ENCODE measurements at regions of chr10 and their contacts with region 1.

Region 1: DNA sequence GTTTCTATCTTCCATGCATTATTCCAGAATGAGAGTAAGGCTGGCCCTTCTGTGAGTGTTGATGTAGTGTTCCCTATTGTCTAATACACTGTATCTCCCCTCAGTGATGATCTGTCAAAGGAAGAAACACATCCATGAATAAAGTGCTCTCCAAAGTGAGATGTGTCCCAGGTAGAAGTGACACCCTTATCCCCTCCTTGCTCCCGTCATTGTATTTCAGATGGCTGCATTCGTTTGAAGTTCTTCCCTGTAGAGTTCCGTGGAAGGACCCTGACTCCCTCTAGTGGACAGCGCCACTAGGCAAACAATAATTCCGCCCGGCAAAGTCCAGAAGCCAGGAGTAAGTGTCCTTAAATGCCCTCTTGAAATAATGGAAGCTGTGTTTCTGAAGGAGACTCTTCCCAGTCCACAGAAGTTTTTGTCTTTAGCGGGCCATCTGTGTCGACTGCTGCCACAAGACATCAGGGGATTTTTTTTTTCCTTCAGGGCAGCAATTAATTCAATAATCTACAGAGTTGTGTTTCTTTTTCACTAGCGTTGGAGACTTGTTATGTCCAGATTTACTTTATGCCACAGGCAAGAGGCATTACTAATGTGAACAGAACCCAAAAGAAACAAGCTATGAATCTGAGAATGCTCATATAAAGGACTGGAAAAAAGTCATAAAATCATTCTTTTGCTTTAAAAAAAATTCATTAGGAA is 64.6 kb downstream of the THNSL1 start:
- DNase-seq: peak; percentile 66
- H3K4me3 ChIP-seq: peak overlapping the region in 1 of 2 experiments; percentile 42; a peak in 1 of 4 replicates
- H3K27ac ChIP-seq: peak overlapping the region; percentile 60 to 65; a peak in 3 of 4 replicates
- H3K4me1 ChIP-seq: peaks cover 0 to 2% of the 10 kb centered on the region in 2 experiments; a peak in 2 of 4 replicates
- H3K27me3 ChIP-seq: no peaks in the 10 kb centered on the region
- CTCF ChIP-seq: peak; percentile 95
- EP300 ChIP-seq: no peak
- RAD21 ChIP-seq: peak; percentile 93

Region 2: DNA sequence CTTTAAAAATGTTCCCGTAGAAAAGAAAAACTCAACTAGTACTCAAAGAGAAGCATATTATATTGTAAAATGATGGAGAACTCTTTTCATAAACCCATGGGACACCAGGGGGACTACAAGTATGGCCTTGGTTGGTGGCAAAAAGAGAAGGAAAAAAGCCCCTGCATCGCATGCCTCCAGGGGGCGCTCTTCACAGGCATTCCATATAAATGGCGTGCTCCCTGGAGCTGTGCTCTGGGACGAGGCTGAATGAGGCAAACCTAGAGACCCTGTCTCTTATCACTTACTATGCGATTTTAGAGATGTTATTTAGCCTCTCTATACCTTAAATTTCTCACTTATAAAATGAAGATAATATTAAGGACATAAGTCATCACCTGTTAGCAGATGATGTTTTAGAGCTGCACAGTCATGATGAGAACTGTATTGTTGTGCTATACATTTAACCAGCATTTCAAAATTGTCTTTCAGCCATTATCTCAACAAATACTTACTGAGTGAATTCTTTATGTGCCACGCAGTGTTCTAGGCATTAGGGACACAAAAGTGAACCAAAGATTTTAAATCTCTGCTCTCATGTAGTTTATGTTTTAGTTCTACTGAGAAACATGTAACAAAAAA is 463.1 kb before region 1 on chr10:
- CTCF ChIA-PET with region 1: interaction called, 10 read pairs
- POLR2A ChIA-PET with region 1: no interaction called
- DNase-seq: peak; percentile 14
- H3K4me3 ChIP-seq: peak overlapping the region in 1 of 2 experiments; percentile 52; a peak in 1 of 4 replicates
- H3K27ac ChIP-seq: no peak overlapping the region
- H3K4me1 ChIP-seq: peaks cover 0 to 4% of the 10 kb centered on the region in 2 experiments; a peak in 2 of 4 replicates
- H3K27me3 ChIP-seq: no peaks in the 10 kb centered on the region
- CTCF ChIP-seq: peak; percentile 80
- EP300 ChIP-seq: no peak
- RAD21 ChIP-seq: peak; percentile 24; the same call in 1 of the 2 replicates

Region 3: GRCh38 chr10:24642622-24643417 is 438.2 kb before region 1 on chr10:
- CTCF ChIA-PET with region 1: interaction called, 32 read pairs
- POLR2A ChIA-PET with region 1: no interaction called
- DNase-seq: peak; percentile 60
- H3K4me3 ChIP-seq: no peak overlapping the region
- H3K27ac ChIP-seq: peak overlapping the region in 1 of 2 experiments; percentile 27; a peak in 1 of 4 replicates
- H3K4me1 ChIP-seq: peaks cover 0 to 4% of the 10 kb centered on the region in 2 experiments; a peak in 2 of 4 replicates
- H3K27me3 ChIP-seq: no peaks in the 10 kb centered on the region
- CTCF ChIP-seq: peak; percentile 85
- EP300 ChIP-seq: no peak
- RAD21 ChIP-seq: peak; percentile 94

Region 4: DNA sequence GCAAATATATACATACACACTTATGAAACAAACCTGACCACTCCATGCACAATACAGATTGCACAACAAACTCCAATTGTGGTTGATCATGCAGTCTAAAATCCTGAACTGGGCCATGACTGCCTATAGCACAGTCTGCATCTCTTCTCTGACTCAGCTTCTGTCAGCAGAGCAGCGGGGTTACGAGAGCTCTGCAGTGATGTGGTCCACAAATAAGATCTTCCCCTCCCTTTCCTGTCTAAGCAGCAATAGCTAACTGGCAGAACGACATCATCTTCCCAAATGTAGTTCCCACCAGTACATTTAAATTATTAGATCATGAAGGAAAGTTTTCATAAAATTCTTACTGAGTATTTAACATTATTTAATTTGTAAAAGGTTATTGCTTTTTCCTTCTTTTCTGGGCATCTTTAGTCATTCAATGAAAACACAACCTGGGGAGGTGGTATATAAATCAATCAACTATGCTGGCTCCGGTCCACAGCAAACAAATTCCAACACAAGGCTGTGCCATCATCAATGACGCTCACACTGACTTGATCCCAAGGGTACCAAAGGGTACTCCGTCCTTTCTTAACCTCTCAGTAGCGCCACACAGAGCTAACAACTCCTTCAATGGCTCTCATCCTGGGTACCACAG is 374.4 kb before region 1 on chr10:
- CTCF ChIA-PET with region 1: no interaction called
- POLR2A ChIA-PET with region 1: no interaction called
- DNase-seq: peak; percentile 42
- H3K4me3 ChIP-seq: no peak overlapping the region
- H3K27ac ChIP-seq: peak overlapping the region in 1 of 2 experiments; percentile 63; a peak in 2 of 4 replicates
- H3K4me1 ChIP-seq: peaks cover 21 to 28% of the 10 kb centered on the region in 2 experiments; a peak in 3 of 4 replicates
- H3K27me3 ChIP-seq: no peaks in the 10 kb centered on the region
- CTCF ChIP-seq: no peak
- EP300 ChIP-seq: no peak
- RAD21 ChIP-seq: no peak

Region 5: GRCh38 chr10:25038325-25038724 is 42.7 kb before region 1 on chr10:
- CTCF ChIA-PET with region 1: interaction called, 10 read pairs
- POLR2A ChIA-PET with region 1: no interaction called
- DNase-seq: no peak
- H3K4me3 ChIP-seq: no peak overlapping the region
- H3K27ac ChIP-seq: no peak overlapping the region
- H3K4me1 ChIP-seq: no peaks in the 10 kb centered on the region
- H3K27me3 ChIP-seq: no peaks in the 10 kb centered on the region
- CTCF ChIP-seq: no peak
- EP300 ChIP-seq: no peak
- RAD21 ChIP-seq: no peak

Region 6: GRCh38 chr10:25047088-25047487 is 33.9 kb before region 1 on chr10:
- CTCF ChIA-PET with region 1: interaction called, 11 read pairs
- POLR2A ChIA-PET with region 1: no interaction called
- DNase-seq: no peak
- H3K4me3 ChIP-seq: no peak overlapping the region
- H3K27ac ChIP-seq: no peak overlapping the region
- H3K4me1 ChIP-seq: no peaks in the 10 kb centered on the region
- H3K27me3 ChIP-seq: no peaks in the 10 kb centered on the region
- CTCF ChIP-seq: no peak
- EP300 ChIP-seq: no peak
- RAD21 ChIP-seq: no peak

Region 7: GRCh38 chr10:25059764-25060389 is 21.2 kb before region 1 on chr10:
- CTCF ChIA-PET with region 1: interaction called, 12 read pairs
- POLR2A ChIA-PET with region 1: no interaction called
- DNase-seq: no peak
- H3K4me3 ChIP-seq: no peak overlapping the region
- H3K27ac ChIP-seq: peak overlapping the region in 1 of 2 experiments; percentile 40; a peak in 2 of 4 replicates
- H3K4me1 ChIP-seq: no peaks in the 10 kb centered on the region; a peak in 1 of 4 replicates
- H3K27me3 ChIP-seq: no peaks in the 10 kb centered on the region
- CTCF ChIP-seq: no peak
- EP300 ChIP-seq: no peak
- RAD21 ChIP-seq: no peak

Region 8: GRCh38 chr10:25068152-25069058 is 12.6 kb before region 1 on chr10:
- CTCF ChIA-PET with region 1: interaction called, 30 read pairs
- POLR2A ChIA-PET with region 1: no interaction called
- DNase-seq: no peak
- H3K4me3 ChIP-seq: no peak overlapping the region
- H3K27ac ChIP-seq: peak overlapping the region in 1 of 2 experiments; percentile 36; a peak in 1 of 4 replicates
- H3K4me1 ChIP-seq: peaks cover 0 to 4% of the 10 kb centered on the region in 2 experiments; a peak in 1 of 4 replicates
- H3K27me3 ChIP-seq: no peaks in the 10 kb centered on the region
- CTCF ChIP-seq: no peak
- EP300 ChIP-seq: no peak
- RAD21 ChIP-seq: no peak

Region 9: DNA sequence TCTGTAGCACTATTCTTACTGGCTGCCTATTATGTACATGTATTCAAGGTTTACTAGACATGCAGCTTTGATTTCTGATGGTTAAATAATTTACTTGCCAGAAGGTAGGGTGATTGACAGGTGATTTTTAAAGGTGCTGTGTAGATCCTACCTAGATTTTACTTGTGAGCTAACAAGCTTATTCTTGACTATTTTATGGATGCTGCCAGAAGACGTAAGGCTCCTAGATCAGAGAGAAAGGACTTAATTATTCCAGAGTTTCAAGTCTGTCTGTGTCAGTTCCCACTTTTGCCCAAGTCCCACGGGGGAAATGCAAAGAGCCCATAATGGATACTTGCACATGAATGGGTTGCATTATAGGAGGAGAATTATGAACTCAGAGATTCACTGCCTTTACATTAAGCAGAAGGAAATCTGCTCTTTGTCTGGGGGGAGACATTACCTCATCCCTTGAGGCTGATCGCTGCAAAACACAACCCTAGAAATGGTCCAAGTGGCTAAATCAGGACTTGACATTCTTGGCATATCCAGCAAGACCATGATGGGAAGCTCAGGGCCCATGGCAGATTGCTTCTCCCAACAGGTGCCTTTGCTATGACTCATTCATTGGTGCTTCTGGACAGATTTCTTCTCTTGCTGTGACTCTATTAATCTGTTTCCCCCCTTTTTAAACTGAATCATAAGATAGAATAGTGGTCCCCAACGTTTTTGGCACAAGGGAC is 125.8 kb after region 1 on chr10:
- CTCF ChIA-PET with region 1: no interaction called
- POLR2A ChIA-PET with region 1: no interaction called
- DNase-seq: no peak
- H3K4me3 ChIP-seq: no peak overlapping the region
- H3K27ac ChIP-seq: no peak overlapping the region
- H3K4me1 ChIP-seq: no peaks in the 10 kb centered on the region
- H3K27me3 ChIP-seq: no peaks in the 10 kb centered on the region
- CTCF ChIP-seq: no peak
- EP300 ChIP-seq: no peak
- RAD21 ChIP-seq: no peak

Measured in SK-N-SH (cell line).